Activated CD4-positive, alpha-beta memory T cell treated with anti-CD3 and anti-CD28 coated beads, Interleukin-2, amount 10 ng/mL, durations not matched to agents 7 days and 5 days (primary cell): ENCODE measurements at regions of chr11 and their contacts with region 1.

Region 1: GRCh38 chr11:83272627-83273026 is 13.5 kb downstream of the CCDC90B start:
- DNase-seq: no peak
- H3K4me3 Mint-ChIP-seq: no peak overlapping the region
- H3K27ac Mint-ChIP-seq: no peak overlapping the region
- H3K4me1 Mint-ChIP-seq: peaks cover 7% of the 10 kb centered on the region
- H3K27me3 Mint-ChIP-seq: no peaks in the 10 kb centered on the region

Region 2: DNA sequence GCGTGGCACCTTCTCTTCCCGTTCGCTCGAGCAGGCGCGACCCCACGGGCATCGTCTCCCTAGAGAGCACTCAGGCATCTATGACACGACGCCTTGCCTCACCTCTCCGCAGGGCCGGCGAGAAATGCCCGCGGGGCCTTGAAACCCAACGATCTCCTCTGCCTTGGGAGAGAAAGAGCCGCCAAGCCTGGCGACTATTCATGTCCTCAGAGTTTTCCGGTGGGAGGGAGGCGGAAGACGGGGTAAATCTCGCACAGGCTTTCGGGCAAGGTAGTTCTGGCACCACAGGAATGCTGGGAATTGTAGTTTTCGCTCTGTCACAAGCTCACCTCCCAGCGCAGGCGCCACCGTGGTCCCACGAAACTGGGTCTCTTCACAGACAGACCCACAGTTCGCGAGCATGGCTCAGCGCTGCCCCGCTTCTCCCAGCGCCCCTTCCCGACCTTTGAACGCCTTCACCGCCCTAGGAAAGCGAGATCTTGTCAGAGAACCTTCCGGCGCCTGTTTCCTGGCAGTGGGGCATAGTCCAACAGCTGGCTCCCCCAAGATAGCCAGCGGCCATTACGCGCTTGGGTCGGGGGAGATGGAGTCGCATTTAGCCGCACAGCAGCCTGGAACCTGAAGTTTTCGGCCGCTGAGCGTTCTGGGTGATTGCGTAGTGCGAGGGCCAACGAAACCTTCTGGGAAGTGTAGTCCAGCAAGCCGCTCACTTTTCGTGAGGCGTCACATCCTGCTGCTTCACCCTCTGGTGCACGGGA is 13.3 kb after region 1 on chr11 and contains the start of gene CCDC90B:
- CTCF ChIA-PET with region 1: no interaction called
- POLR2A ChIA-PET with region 1: interaction called, 10 read pairs
- DNase-seq: peak; percentile 95
- H3K4me3 Mint-ChIP-seq: peak within 1 kb of the TSS; percentile 92
- H3K27ac Mint-ChIP-seq: peak within 1 kb of the TSS; percentile 97
- H3K4me1 Mint-ChIP-seq: peaks cover 33% of the 10 kb centered on the region
- H3K27me3 Mint-ChIP-seq: no peaks in the 10 kb centered on the region
- total RNA-seq, gene CCDC90B: 29.7 to 31.5 TPM